Activated naive CD4-positive, alpha-beta T cell treated with anti-CD3 and anti-CD28 coated beads for 36 hours (primary cell): ENCODE measurements at regions of chr11 and their contacts with region 1.

Region 1: GRCh38 chr11:70202898-70203748 is at the start of gene FADD:
- DNase-seq: peak; percentile 93
- H3K4me3 Mint-ChIP-seq: peak within 1 kb of the TSS; percentile 95
- H3K27ac Mint-ChIP-seq: peak within 1 kb of the TSS; percentile 99
- H3K4me1 Mint-ChIP-seq: peaks cover 32% of the 10 kb centered on the region
- H3K27me3 Mint-ChIP-seq: peaks cover 2% of the 10 kb centered on the region
- total RNA-seq, gene FADD: 23.6 to 24.4 TPM

Region 2: DNA sequence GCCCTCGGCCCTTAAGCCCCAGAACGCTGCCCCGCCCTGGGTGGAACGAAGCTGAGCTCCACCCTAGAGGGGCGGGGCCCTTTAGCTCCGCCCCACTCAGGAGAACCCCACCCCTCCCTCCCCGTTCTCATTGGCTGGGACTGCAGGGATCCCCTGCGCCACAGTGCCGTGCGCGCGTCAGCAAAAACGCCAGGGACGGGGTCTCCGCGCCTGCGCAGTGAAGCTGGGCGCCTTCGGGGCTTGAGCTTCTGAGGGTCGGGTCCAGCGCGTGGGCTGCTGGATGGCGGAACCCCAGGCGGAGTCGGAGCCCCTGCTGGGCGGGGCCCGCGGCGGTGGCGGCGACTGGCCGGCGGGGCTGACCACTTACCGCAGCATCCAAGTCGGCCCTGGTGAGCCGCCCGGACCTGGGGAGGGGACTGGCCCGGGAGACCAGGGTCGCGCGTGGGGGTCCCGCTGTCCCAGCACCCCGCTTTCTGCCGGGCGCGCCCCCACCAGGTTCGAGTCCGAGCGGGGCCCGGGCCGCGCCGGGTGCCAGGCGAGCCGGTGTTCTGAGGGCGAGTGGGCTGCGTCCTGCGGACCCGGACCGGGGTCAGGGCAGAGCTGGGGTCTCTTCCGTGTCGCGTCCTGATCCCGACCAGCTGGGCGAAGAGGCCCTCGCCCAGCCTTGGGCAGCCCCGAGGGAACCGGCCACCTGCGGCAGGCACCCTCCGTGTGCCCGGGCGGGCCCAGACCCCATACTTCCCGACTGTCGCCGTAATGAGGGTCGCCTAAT is 1154.2 kb before region 1 on chr11 and contains the start of gene TPCN2:
- CTCF ChIA-PET with region 1: no interaction called
- intact Hi-C with region 1: loop called (anchors 5 kb)
- DNase-seq: peak; percentile 90
- H3K4me3 Mint-ChIP-seq: peak within 1 kb of the TSS; percentile 72
- H3K27ac Mint-ChIP-seq: peak within 1 kb of the TSS; percentile 66
- H3K4me1 Mint-ChIP-seq: peaks cover 16% of the 10 kb centered on the region
- H3K27me3 Mint-ChIP-seq: no peaks in the 10 kb centered on the region
- total RNA-seq, gene TPCN2: 7.0 to 8.0 TPM

Region 3: DNA sequence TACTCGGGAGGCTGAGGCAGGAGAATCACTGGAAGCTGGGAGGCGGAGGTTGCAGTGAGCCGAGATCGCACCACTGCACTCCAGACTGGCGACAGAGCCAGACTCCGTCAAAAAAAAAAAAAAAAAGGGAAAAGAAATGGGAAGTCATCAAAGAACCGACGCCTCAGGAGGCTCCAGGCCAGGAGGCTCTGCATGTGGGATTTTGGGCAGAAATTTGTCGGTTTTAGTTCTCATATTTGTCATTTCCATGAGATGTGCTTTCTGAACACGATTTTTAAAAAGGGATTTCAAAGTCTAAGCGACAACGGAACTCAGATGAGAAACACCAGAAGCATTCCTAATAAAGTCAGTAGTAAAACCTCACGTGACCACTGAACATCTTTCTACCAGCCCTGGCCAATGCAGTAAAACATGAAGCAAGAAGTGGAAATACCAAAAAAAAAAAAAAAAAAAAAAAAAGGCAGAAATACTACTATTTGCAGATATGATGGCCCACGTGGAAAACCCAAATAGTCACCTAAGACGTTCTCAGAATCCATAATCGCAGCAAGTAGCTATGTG is 527.2 kb before region 1 on chr11:
- CTCF ChIA-PET with region 1: no interaction called
- intact Hi-C with region 1: loop called (anchors 5 kb)
- DNase-seq: no peak
- H3K4me3 Mint-ChIP-seq: peak overlapping the region; percentile 90
- H3K27ac Mint-ChIP-seq: peak overlapping the region; percentile 78
- H3K4me1 Mint-ChIP-seq: peaks cover 20% of the 10 kb centered on the region
- H3K27me3 Mint-ChIP-seq: no peaks in the 10 kb centered on the region

Region 4: DNA sequence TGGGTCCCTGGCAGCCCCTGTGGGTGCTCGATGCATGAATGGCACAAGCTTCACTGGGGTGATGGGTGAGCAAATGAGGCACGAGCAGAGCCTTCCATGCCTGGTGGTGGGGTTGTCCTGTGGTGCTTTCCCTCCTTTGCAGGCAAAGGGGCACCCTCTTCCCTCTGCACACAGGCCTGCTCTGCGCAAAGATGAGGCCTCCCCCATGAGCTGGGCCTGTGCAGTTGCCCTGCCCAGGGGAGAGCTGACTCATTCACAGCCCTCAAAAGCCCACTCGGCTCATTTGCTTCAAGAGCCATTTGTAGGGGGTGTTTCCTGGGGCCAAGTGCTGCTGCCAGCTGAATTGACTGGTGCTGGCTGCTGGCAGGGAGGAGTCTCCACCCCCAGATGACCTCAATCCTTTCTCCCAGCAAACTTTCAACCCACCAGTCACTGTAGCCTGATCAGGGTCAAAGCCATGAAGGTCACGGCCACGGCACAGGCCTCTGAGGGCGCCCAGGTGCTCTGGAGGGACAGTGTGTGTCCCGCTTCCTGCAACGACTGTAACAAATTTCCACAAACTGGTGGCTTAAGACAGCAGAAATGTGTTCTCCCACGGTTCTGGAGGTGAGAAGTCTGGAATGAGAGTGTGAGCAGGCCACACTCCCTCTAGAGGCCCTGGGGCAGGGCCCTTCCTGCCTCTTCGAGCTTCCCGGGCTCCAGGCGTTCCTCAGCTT is 173.8 kb before region 1 on chr11:
- CTCF ChIA-PET with region 1: no interaction called
- intact Hi-C with region 1: no loop called
- DNase-seq: no peak
- H3K4me3 Mint-ChIP-seq: no peak overlapping the region
- H3K27ac Mint-ChIP-seq: no peak overlapping the region
- H3K4me1 Mint-ChIP-seq: no peaks in the 10 kb centered on the region
- H3K27me3 Mint-ChIP-seq: peaks cover 5% of the 10 kb centered on the region

Region 5: DNA sequence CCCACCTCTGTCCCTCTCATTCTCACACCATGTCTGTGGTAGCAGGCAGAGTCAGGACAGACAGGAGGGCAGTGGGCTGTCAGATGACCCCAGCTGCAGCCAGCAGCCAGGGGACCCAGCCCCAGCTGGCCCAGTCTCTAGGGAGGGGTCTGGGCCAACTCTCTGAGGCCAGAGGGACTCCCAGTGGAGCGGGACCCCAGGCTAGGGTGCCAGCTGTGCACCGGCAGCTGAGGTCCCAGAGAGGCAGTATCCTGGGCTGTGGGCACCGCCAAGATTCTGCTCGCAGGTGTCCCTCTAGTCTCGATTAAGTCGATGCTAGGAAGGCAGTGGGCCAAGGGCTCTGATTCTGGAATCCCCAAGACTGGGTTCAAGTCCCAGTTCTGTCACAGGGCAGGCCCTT is 16.7 kb before region 1 on chr11:
- CTCF ChIA-PET with region 1: no interaction called
- intact Hi-C with region 1: no loop called
- DNase-seq: no peak
- H3K4me3 Mint-ChIP-seq: no peak overlapping the region
- H3K27ac Mint-ChIP-seq: no peak overlapping the region
- H3K4me1 Mint-ChIP-seq: peaks cover 2% of the 10 kb centered on the region
- H3K27me3 Mint-ChIP-seq: peaks cover 3% of the 10 kb centered on the region

Region 6: DNA sequence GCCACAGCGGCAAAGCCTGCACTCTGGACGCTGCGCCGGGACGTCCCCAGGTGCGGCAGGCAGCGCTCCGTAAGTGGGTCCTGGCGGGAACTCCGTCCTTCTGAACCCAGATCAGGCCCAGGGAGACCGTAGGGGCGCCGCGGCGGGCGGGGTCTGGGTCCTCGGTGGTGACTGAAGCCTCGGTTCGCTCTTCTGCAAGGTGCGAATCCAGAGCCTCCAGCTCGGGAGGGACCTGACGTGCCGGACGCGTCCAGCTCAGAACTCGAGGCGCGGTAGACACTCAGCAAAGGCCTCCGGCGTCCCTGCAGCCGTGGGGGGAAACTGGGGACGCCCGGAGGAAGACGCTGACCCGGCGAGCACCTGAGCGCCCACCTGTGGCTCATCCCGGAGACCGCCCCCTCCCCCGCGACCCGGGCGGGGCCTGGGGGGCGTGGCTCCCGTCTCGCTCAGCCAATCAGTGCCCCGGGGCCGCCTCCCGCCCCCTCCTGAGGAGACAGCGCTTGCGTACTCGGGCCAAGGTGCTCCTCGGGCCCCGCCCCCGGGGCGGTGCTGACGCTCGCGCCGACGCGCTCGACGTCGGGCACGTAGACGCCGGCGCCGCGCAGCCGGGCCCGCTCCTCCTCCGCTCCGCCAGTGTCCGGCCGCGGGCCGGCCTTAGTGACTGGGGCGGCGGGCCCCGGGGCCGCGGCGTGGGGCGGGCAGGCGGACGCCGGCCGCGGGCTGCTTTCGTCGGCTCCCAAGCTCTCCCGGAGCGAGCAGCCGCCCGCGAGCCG is 67.2 kb after region 1 on chr11 and contains the start of gene PPFIA1:
- CTCF ChIA-PET with region 1: no interaction called
- intact Hi-C with region 1: loop called (anchors 1 kb)
- DNase-seq: peak; percentile 94
- H3K4me3 Mint-ChIP-seq: peak within 1 kb of the TSS; percentile 87
- H3K27ac Mint-ChIP-seq: peak within 1 kb of the TSS; percentile 36
- H3K4me1 Mint-ChIP-seq: peaks cover 38% of the 10 kb centered on the region
- H3K27me3 Mint-ChIP-seq: peaks cover 10% of the 10 kb centered on the region
- total RNA-seq, gene PPFIA1: 15.9 to 21.7 TPM

Region 7: DNA sequence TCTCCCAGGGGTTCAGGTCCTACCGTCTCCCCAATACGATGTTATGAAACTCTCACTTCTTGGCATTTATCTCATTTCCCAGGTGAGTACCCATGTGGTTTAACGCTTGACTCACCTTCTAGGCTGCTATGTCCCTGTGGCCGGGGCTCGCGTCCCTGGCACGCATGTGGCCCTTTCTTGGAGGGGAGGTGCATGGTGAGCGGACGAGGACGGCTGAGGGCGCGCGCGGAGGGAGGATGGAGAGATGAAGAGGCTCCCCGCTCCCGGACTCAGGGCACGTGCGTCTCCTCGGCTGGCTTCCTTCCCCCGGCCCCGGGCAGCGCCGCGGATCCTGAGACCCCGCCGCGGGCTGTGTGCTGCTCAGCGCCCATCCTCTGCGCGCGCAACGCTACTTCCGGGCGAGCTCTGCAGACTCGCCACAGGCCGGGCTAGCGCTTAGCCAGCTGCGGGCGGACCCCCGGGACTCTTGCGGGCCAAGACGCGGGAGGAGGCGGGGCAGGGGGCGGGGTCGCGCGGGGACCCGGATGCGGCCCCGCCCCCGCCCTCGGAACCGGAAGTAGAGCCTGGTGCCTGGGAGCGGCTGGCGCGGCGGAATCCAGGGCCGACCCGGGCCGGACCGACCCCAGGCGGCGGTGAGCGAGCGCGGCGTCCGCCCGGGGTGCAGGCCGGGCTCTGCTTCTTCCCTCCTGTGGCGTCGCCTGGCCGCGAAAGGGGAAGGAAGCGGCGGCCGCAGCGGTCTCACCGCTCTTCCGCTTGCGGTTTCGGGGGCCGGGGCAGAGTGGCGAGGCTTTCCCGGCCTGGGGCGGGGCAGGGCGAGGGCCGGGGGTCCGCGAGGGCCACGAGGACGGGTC is 195.1 kb after region 1 on chr11 and contains the start of gene CTTN:
- CTCF ChIA-PET with region 1: no interaction called
- intact Hi-C with region 1: loop called (anchors 1 kb)
- DNase-seq: peak; percentile 71
- H3K4me3 Mint-ChIP-seq: peak within 1 kb of the TSS; percentile 80
- H3K27ac Mint-ChIP-seq: peak within 1 kb of the TSS; percentile 77
- H3K4me1 Mint-ChIP-seq: peaks cover 37% of the 10 kb centered on the region
- H3K27me3 Mint-ChIP-seq: peaks cover 7% of the 10 kb centered on the region
- total RNA-seq, gene CTTN: 44.8 to 52.7 TPM

Region 8: DNA sequence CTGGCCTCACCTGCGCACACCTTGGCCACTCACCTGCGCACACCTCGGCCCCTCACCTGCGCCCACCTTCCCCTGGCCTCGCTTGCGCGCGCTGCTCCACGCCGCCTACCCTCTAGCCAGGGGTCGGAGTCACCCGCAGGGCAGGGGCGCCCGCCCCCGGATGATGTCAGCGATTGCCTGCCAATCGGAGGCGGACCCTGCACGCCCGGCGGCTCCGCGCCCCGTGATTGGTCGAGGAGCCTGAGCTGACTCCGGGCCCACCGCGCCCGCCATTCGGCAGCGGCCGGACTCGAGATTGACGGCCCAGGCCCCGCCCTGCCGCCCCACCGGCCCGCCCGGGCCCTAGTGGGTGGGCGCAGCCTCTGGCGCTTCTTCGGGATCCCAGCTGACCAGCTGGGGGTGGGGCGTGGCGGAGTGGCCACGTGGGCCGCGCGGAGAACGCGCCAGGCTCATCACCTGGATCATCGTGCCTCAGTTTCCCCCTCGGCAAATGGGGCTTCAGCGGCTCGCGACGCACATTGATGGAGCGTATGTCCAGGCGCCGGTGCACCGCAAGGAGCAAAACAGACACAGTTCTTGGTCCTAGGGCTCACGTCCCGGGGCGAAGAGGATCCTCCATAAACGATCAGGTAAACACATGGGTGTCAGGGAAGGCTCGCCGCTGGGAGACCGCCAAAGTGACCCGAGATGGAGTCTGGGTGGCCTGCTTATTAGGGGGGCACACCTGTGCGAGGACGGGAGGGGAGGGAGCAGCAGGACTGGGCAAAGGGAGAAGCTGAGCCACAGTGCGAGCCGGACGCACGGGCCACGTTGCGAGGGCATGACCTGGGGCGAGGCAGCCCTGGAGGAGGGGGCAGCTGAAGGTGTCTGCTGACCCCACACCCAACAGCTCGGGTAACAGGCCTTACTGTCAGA is 1245.4 kb after region 1 on chr11 and contains the start of gene DHCR7:
- CTCF ChIA-PET with region 1: no interaction called
- intact Hi-C with region 1: loop called (anchors 5 kb)
- DNase-seq: peak; percentile 93
- H3K4me3 Mint-ChIP-seq: peak within 1 kb of the TSS; percentile 91
- H3K27ac Mint-ChIP-seq: peak within 1 kb of the TSS; percentile 86
- H3K4me1 Mint-ChIP-seq: peaks cover 40% of the 10 kb centered on the region
- H3K27me3 Mint-ChIP-seq: no peaks in the 10 kb centered on the region
- total RNA-seq, gene DHCR7: 52.0 to 58.7 TPM